ENCODE measurements at regions of chr14 and their contacts with region 1.

Region 1: GRCh38 chr14:67695394-67695949 is at the start of gene RDH11:
- DNase-seq: peak; percentile 50
- ATAC-seq: peak; percentile 96
- H3K4me3 ChIP-seq: peak within 1 kb of the TSS; percentile 97
- H3K27ac ChIP-seq: peak within 1 kb of the TSS; percentile 88
- H3K4me1 ChIP-seq: no peaks in the 10 kb centered on the region
- H3K27me3 ChIP-seq: no peaks in the 10 kb centered on the region
- CTCF ChIP-seq: no peak
- EP300 ChIP-seq: no peak
- POLR2A ChIP-seq: peak; percentile 91
- RAD21 ChIP-seq: no peak
- polyA plus RNA-seq, gene RDH11: 76.2 to 88.7 TPM

Region 2: DNA sequence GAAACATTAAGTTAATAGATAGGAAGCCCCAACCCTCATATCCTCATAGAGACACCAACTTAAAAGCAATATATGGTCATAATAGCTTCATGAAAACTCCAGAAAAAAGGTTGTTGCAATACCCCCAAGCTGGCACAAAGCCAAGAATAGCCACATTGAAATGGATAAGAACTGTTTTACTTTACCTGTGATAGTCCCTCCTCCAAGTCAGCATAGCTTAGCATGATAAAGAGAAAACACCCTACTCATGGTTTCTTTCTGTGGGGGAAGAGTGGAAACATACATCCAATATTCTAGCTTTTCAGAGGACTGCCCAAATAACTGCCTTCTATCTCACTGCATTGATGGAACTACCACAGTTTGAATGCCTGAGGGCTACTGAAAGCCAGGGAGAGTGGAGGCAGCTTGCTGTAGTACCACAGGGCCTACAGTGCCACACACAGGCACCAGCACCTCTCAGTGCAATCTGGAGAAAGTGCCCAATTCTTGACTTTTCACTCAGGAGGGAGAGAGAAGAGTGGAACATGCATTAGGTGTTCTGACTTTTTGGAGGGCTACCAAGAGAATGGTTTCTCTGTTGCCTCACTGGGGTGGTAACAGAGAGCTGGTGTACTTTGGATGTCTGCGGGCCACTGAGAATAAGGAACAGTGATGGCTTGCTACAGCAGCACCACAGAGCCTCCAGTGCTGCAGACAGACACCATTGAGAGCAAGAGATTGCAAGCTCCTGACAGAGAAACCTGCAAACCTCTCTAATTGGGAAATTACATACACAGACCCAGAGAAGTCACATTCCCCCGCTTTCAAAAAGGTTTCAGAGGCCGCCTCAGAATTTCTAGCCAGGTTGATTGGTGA is 663.3 kb before region 1 on chr14:
- CTCF ChIA-PET with region 1: no interaction called
- POLR2A ChIA-PET with region 1: no interaction called
- RAD21 ChIA-PET with region 1: no interaction called
- SMC1A ChIA-PET with region 1: no interaction called
- in situ Hi-C with region 1: no loop called
- intact Hi-C with region 1: no loop called
- DNase-seq: no peak
- ATAC-seq: no peak
- H3K4me3 ChIP-seq: no peak overlapping the region
- H3K27ac ChIP-seq: no peak overlapping the region
- H3K4me1 ChIP-seq: no peaks in the 10 kb centered on the region
- H3K27me3 ChIP-seq: no peaks in the 10 kb centered on the region
- CTCF ChIP-seq: no peak
- EP300 ChIP-seq: no peak
- POLR2A ChIP-seq: no peak
- RAD21 ChIP-seq: no peak

Region 3: GRCh38 chr14:67583711-67584644 is 111.5 kb before region 1 on chr14:
- CTCF ChIA-PET with region 1: interaction called, 359 read pairs
- POLR2A ChIA-PET with region 1: no interaction called
- RAD21 ChIA-PET with region 1: interaction called, 4 read pairs
- SMC1A ChIA-PET with region 1: interaction called, 206 read pairs
- in situ Hi-C with region 1: loop called (anchors 10 kb)
- intact Hi-C with region 1: no loop called
- DNase-seq: no peak
- ATAC-seq: peak; percentile 98
- H3K4me3 ChIP-seq: no peak overlapping the region
- H3K27ac ChIP-seq: no peak overlapping the region
- H3K4me1 ChIP-seq: no peaks in the 10 kb centered on the region
- H3K27me3 ChIP-seq: no peaks in the 10 kb centered on the region
- CTCF ChIP-seq: peak; percentile 77 to 83 (median 80)
- EP300 ChIP-seq: no peak
- POLR2A ChIP-seq: no peak
- RAD21 ChIP-seq: peak; percentile 96

Region 4: DNA sequence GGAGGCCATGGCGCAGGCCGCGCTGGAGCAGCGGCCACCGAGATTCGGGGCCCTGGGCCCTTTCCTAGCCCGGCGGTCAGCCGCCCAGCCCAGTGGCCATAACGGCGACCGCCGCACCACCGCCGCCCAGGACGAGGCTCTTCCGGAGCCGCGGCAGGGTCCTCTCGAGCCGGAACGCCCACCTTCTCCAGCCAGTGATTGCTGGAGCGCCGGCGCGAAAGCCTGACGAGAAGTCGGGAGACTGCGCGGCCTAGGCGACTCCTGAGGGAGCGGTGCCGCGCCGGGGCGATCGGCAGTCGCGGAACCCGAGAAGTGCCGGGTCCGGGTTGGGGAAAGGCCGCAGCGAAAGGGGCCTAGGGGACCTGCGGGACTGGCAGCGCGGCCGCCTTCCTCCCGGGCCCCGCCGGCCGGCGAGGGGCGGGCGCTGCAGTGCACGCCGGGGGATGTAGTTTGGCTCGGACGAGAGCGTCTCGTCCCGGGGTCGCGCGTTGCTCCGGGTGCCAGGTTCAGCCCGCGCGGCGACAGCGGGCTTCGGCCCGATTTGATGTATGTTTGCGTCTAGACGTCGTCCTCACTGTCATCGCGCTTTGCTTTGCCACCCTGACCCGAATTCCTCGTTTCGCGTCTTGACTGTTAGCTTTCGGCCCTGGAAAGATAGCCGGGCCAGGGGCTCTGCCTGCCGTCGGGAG is 20.8 kb before region 1 on chr14 and contains the start of gene VTI1B:
- CTCF ChIA-PET with region 1: interaction called, 223 read pairs
- POLR2A ChIA-PET with region 1: interaction called, 71 read pairs
- RAD21 ChIA-PET with region 1: interaction called, 144 read pairs
- SMC1A ChIA-PET with region 1: interaction called, 41 read pairs
- in situ Hi-C with region 1: no loop called
- intact Hi-C with region 1: no loop called
- DNase-seq: no peak
- ATAC-seq: peak; percentile 97
- H3K4me3 ChIP-seq: peak within 1 kb of the TSS; percentile 85
- H3K27ac ChIP-seq: peak within 1 kb of the TSS; percentile 97
- H3K4me1 ChIP-seq: peaks cover 9% of the 10 kb centered on the region
- H3K27me3 ChIP-seq: no peaks in the 10 kb centered on the region
- CTCF ChIP-seq: 0 out of 6 replicates have a peak, but pooled peaks of 1 of the 3 experiments have one; percentile 0
- EP300 ChIP-seq: no peak
- POLR2A ChIP-seq: peak; percentile 94
- RAD21 ChIP-seq: no peak
- polyA plus RNA-seq, gene VTI1B: 15.0 to 43.8 TPM

Region 5: GRCh38 chr14:67680121-67680602 is 15.3 kb before region 1 on chr14:
- CTCF ChIA-PET with region 1: interaction called, 223 read pairs
- POLR2A ChIA-PET with region 1: interaction called, 71 read pairs
- RAD21 ChIA-PET with region 1: interaction called, 7 read pairs
- SMC1A ChIA-PET with region 1: interaction called, 41 read pairs
- in situ Hi-C with region 1: no loop called
- intact Hi-C with region 1: loop called (anchors 2 kb)
- DNase-seq: peak; percentile 90
- ATAC-seq: peak; percentile 98
- H3K4me3 ChIP-seq: peak overlapping the region; percentile 25; the same call in 1 of the 2 replicates
- H3K27ac ChIP-seq: peak overlapping the region; percentile 58
- H3K4me1 ChIP-seq: peaks cover 22% of the 10 kb centered on the region
- H3K27me3 ChIP-seq: no peaks in the 10 kb centered on the region
- CTCF ChIP-seq: no peak
- EP300 ChIP-seq: peak; percentile 54 to 91; a peak in 2 of 4 replicates
- POLR2A ChIP-seq: no peak
- RAD21 ChIP-seq: no peak

Region 6: GRCh38 chr14:67784244-67784823 is 88.9 kb after region 1 on chr14:
- CTCF ChIA-PET with region 1: no interaction called
- POLR2A ChIA-PET with region 1: no interaction called
- RAD21 ChIA-PET with region 1: no interaction called
- SMC1A ChIA-PET with region 1: no interaction called
- in situ Hi-C with region 1: no loop called
- intact Hi-C with region 1: no loop called
- DNase-seq: no peak
- ATAC-seq: no peak
- H3K4me3 ChIP-seq: no peak overlapping the region
- H3K27ac ChIP-seq: no peak overlapping the region
- H3K4me1 ChIP-seq: no peaks in the 10 kb centered on the region
- H3K27me3 ChIP-seq: no peaks in the 10 kb centered on the region
- CTCF ChIP-seq: no peak
- EP300 ChIP-seq: no peak
- POLR2A ChIP-seq: no peak
- RAD21 ChIP-seq: no peak

Region 7: GRCh38 chr14:67798731-67799130 is 103.3 kb after region 1 on chr14:
- CTCF ChIA-PET with region 1: no interaction called
- POLR2A ChIA-PET with region 1: no interaction called
- RAD21 ChIA-PET with region 1: no interaction called
- SMC1A ChIA-PET with region 1: no interaction called
- in situ Hi-C with region 1: no loop called
- intact Hi-C with region 1: no loop called
- DNase-seq: no peak
- ATAC-seq: no peak
- H3K4me3 ChIP-seq: no peak overlapping the region
- H3K27ac ChIP-seq: no peak overlapping the region
- H3K4me1 ChIP-seq: no peaks in the 10 kb centered on the region
- H3K27me3 ChIP-seq: no peaks in the 10 kb centered on the region
- CTCF ChIP-seq: no peak
- EP300 ChIP-seq: no peak
- POLR2A ChIP-seq: no peak
- RAD21 ChIP-seq: no peak